Prostate gland (tissue), 2 donors: ENCODE measurements at regions of chr17 and their contacts with region 1.

Region 1: DNA sequence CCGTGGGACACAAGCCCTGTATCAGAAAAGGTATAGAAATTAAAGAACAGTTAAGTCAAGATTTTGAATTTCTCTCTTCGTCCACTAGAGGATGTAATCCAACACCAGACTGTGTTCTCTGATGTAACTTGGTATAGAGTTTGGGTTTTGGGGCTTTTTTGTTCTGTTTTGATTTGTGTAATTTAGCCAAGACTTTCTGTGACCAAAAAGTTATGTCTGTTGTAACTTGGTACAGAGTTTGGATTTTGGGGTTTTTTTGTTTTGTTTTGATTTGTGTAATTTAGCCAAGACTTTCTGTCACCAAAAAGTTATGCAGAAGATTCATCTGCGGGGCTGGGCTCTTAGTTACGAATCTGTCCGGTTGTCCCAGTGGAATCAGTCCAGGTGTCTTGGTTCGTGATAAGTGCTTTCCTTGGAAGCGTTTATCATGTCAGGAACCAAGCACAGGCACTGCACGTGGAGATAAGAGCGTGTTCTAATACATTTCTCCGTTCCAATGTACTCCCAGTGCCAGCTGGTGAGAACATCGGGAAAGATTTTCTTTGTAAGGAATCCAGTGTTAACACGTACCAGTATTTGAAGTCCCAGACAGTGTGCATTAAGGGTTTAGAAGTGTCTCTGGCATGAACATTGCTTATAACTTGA is 44.1 kb upstream of the SEC14L1 start:
- DNase-seq: peak; percentile 43
- H3K4me3 ChIP-seq: no peak overlapping the region
- H3K27ac ChIP-seq: peak overlapping the region; percentile 45 to 52
- H3K4me1 ChIP-seq: no peaks in the 10 kb centered on the region
- H3K27me3 ChIP-seq: no peaks in the 10 kb centered on the region
- CTCF ChIP-seq: peak; percentile 69 to 85 (median 82)
- POLR2A ChIP-seq: no peak

Region 2: GRCh38 chr17:77109764-77110359 is 13.2 kb after region 1 on chr17:
- intact Hi-C with region 1: no loop called
- DNase-seq: peak; percentile 67
- H3K4me3 ChIP-seq: no peak overlapping the region
- H3K27ac ChIP-seq: peak overlapping the region; percentile 84 to 87
- H3K4me1 ChIP-seq: peaks cover 4% of the 10 kb centered on the region
- H3K27me3 ChIP-seq: no peaks in the 10 kb centered on the region
- CTCF ChIP-seq: no peak
- POLR2A ChIP-seq: no peak

Region 3: GRCh38 chr17:77140166-77140878 is 43.6 kb after region 1 on chr17:
- intact Hi-C with region 1: loop called (anchors 5 kb)
- DNase-seq: peak; percentile 99
- H3K4me3 ChIP-seq: peak overlapping the region; percentile 86 to 97
- H3K27ac ChIP-seq: peak overlapping the region; percentile 93 to 98
- H3K4me1 ChIP-seq: peaks cover 1% of the 10 kb centered on the region
- H3K27me3 ChIP-seq: no peaks in the 10 kb centered on the region
- CTCF ChIP-seq: peak in 3 of 4 experiments; percentile 21 to 39 (median 36)
- POLR2A ChIP-seq: peak; percentile 99

Region 4: GRCh38 chr17:77215281-77215680 is 118.6 kb after region 1 on chr17:
- intact Hi-C with region 1: no loop called
- DNase-seq: no peak
- H3K4me3 ChIP-seq: no peak overlapping the region
- H3K27ac ChIP-seq: no peak overlapping the region
- H3K4me1 ChIP-seq: no peaks in the 10 kb centered on the region
- H3K27me3 ChIP-seq: no peaks in the 10 kb centered on the region
- CTCF ChIP-seq: no peak
- POLR2A ChIP-seq: no peak

Region 5: GRCh38 chr17:77266891-77267341 is 170.2 kb after region 1 on chr17:
- intact Hi-C with region 1: no loop called
- DNase-seq: no peak
- H3K4me3 ChIP-seq: no peak overlapping the region
- H3K27ac ChIP-seq: no peak overlapping the region
- H3K4me1 ChIP-seq: no peaks in the 10 kb centered on the region
- H3K27me3 ChIP-seq: no peaks in the 10 kb centered on the region
- CTCF ChIP-seq: no peak
- POLR2A ChIP-seq: no peak